ENCODE measurements at regions of chr3 and their contacts with region 1.

Region 1: GRCh38 chr3:57597122-57597923 is at the start of gene ARF4:
- DNase-seq: peak; percentile 100
- H3K4me3 Mint-ChIP-seq: peak within 1 kb of the TSS; percentile 87
- H3K27ac Mint-ChIP-seq: peak within 1 kb of the TSS; percentile 98
- H3K4me1 Mint-ChIP-seq: peaks cover 45% of the 10 kb centered on the region
- H3K27me3 Mint-ChIP-seq: no peaks in the 10 kb centered on the region
- total RNA-seq, gene ARF4: 64.9 to 68.9 TPM

Region 2: DNA sequence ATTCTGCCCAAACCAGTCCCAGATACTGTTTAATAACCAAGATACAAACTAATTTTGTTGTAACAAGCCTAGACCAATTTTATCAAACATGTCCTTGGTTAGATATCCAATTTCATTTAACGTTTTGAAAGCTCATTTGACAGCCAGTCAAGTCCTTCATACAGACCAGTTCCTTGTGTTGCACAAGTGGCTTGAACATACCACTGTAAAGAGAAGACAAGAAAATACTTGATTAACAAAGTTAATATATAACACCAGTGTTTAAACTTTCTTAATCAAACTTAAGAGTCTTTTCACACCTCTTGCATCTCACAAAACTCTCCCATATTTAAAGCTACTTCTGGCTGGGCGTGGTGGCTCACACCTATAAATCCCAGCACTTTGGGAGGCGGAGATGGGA is 25.2 kb before region 1 on chr3:
- CTCF ChIA-PET with region 1: interaction called, 4 read pairs
- POLR2A ChIA-PET with region 1: interaction called, 11 read pairs
- DNase-seq: no peak
- H3K4me3 Mint-ChIP-seq: no peak overlapping the region
- H3K27ac Mint-ChIP-seq: no peak overlapping the region
- H3K4me1 Mint-ChIP-seq: peaks cover 10% of the 10 kb centered on the region
- H3K27me3 Mint-ChIP-seq: no peaks in the 10 kb centered on the region

Region 3: DNA sequence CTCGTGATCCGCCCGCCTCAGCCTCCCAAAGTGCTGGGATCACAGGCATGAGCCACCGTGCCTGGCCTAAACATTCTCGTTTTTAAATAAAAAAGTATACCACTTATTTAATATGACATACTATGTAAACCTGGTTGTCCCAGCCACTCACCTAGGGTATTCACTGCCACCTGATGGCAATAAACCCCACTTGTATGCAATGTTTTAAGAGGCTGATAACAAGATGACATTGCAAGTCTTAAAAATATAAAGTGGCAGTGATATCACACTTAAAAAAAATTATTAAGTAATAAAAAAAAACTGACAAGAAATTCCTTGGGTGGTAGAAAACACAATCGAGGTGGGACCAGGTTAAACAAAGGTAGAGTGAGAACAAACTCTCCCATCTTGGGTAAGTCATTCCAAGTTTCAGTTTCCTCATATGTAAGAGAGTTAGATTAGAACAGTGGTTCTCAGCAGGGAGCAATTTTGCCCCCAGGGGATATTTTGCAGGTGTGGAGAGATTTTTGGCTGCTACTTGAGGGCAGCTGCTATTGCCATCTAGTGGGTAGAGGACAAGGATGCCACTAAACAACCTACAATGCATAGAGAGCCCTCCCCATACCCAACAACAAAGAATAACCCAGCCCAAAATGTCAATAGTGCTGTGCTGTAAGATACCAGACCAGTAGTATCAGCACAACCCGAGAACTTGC is 14.7 kb before region 1 on chr3:
- CTCF ChIA-PET with region 1: interaction called, 4 read pairs
- POLR2A ChIA-PET with region 1: interaction called, 21 read pairs
- DNase-seq: no peak
- H3K4me3 Mint-ChIP-seq: no peak overlapping the region
- H3K27ac Mint-ChIP-seq: no peak overlapping the region
- H3K4me1 Mint-ChIP-seq: peaks cover 12% of the 10 kb centered on the region
- H3K27me3 Mint-ChIP-seq: no peaks in the 10 kb centered on the region

Region 4: GRCh38 chr3:57692259-57693147 is 95.2 kb after region 1 on chr3 and contains the start of gene DENND6A:
- CTCF ChIA-PET with region 1: interaction called, 6 read pairs
- POLR2A ChIA-PET with region 1: interaction called, 29 read pairs
- DNase-seq: peak; percentile 97
- H3K4me3 Mint-ChIP-seq: peak within 1 kb of the TSS; percentile 81
- H3K27ac Mint-ChIP-seq: peak within 1 kb of the TSS; percentile 89
- H3K4me1 Mint-ChIP-seq: peaks cover 39% of the 10 kb centered on the region
- H3K27me3 Mint-ChIP-seq: peaks cover 2% of the 10 kb centered on the region
- total RNA-seq, gene DENND6A: 28.5 to 29.6 TPM

Region 5: DNA sequence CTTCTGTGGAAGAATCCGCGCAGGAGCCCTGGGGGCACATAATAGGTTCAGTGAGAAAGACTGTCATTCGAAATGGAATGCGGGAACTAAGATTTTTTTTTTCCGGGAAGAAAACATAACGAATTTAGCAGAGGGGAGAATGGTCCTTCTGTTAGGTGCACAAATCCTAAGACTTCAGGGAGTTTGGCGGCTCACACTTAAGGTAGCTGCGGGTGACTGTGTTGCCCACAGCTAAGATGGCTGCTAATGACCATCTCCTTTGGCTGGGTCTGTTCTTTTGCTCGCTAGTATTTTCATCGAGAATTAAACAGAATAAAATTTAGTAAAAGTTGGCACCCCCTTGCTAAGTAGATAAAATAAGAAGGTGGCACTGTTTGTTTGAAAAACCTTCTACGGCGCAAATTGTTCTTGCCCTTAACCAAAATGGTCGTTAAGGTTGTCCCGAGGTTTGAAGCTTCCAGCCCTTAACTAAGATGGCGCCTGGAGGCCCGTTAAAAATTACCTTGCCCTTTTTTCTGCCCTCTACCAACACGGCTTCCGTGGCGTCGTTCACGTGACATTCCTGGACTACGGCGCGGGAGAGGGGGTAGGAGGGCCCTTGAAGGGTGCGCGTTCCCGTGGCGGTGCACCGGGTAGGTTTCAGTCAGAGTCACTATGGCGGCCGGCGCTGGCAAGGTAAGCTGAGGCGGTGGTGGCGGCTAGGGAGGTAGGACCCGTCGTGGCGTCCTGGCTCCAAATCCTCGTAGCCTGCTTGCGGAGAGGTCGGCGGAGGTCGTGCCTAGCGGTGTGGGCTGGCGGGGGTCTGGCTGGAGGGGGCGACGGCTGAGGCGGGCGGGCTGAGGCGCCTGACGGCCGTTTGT is 158.6 kb after region 1 on chr3 and contains the start of gene SLMAP:
- CTCF ChIA-PET with region 1: interaction called, 4 read pairs
- POLR2A ChIA-PET with region 1: interaction called, 41 read pairs
- DNase-seq: peak; percentile 97
- H3K4me3 Mint-ChIP-seq: peak within 1 kb of the TSS; percentile 97
- H3K27ac Mint-ChIP-seq: peak within 1 kb of the TSS; percentile 84
- H3K4me1 Mint-ChIP-seq: peaks cover 43% of the 10 kb centered on the region
- H3K27me3 Mint-ChIP-seq: peaks cover 5% of the 10 kb centered on the region
- total RNA-seq, gene SLMAP: 53.4 to 55.6 TPM